IMR-90 (cell line): ENCODE measurements at regions of chr13 and their contacts with region 1.

Region 1: DNA sequence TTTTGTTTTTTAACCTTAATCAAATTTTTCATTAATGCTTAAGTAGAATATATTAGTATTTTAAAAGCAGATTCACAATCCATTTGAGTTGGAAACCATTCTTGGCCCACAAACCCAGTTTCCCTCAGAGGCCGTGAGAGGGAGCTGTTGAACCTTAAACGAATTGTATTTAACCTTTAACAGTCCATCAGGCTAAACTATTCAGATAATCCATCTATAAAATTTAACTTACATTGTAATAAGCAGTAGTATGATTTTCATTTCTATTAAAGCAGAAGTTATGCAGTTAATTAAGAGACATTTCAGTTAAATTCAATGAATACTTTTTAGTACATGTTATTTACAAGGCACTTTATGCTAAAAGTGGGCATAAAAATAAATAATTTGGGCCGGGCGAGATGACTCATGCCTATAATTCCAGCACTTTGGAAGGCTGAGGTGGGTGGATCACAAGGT is 123.1 kb upstream of the C1QTNF9B start:
- DNase-seq: peak; percentile 76
- ATAC-seq: peak; percentile 92
- H3K4me3 ChIP-seq: no peak overlapping the region
- H3K27ac ChIP-seq: no peak overlapping the region
- H3K4me1 ChIP-seq: no peaks in the 10 kb centered on the region; the same call in 1 of the 2 replicates
- H3K27me3 ChIP-seq: no peaks in the 10 kb centered on the region
- CTCF ChIP-seq: peak; percentile 93
- POLR2A ChIP-seq: no peak
- RAD21 ChIP-seq: peak; percentile 89

Region 2: DNA sequence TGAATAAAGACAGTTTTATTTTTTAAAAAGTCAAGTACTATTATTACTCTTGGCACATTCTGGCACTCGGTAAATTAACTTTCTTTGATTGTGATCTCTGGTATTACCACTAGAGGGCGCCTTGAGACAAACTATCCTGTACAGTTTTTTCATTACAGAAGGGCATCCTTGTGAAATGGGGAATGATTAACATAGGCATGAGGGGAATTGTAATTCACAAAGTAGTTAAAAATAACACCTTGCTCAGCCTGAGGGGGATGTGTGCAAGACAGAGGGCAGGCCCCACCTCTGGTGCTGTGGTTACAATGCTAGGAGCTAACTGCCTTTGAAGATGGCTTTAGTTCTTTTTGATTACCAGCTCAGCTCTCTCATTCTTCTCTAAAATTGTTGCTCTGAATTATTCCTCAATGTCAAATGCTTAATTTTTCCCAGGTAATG is 98.9 kb before region 1 on chr13:
- CTCF ChIA-PET with region 1: no interaction called
- POLR2A ChIA-PET with region 1: no interaction called
- dilution Hi-C with region 1: no loop called
- in situ Hi-C with region 1: no loop called
- intact Hi-C with region 1: loop called (anchors 2 kb)
- DNase-seq: peak; percentile 66
- ATAC-seq: peak; percentile 61
- H3K4me3 ChIP-seq: no peak overlapping the region
- H3K27ac ChIP-seq: no peak overlapping the region
- H3K4me1 ChIP-seq: peaks cover 2% of the 10 kb centered on the region; the same call in 1 of the 2 replicates
- H3K27me3 ChIP-seq: no peaks in the 10 kb centered on the region
- CTCF ChIP-seq: peak; percentile 83
- POLR2A ChIP-seq: no peak
- RAD21 ChIP-seq: peak; percentile 86

Region 3: DNA sequence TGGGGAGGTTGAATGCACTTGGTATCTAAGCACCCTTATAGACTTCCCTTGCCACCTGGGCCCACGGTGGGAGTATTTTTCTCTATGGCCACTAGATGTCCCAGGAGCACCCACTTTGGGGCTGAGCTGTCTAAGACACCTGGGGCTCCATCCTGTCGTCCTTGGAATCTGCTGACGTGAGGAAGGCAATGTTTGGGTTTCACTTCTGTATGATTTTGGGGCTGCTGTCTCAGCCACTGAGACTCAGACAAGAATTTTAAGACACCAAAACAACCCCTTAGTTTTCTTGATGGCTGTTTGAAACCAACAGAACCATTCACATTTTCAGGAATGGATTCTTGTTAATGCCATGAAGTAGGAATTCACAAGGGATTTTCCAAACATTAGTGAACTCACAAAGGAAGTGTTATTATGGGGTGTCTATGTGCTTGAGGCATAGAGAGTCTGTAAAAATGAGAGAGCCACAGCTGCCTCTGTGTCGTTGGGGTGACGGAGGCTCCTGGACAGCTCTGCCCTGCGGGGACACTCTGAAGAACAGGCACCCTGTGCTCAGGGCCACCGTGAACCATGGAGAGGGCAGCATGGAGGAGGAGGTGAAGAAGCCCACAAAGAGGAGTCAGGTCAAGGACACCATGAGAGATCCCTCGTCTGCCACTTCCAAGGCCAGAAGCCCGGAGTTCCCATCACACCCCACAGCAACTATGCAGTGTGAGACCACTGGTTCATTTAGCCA is 33.3 kb after region 1 on chr13:
- CTCF ChIA-PET with region 1: interaction called, 3 read pairs
- POLR2A ChIA-PET with region 1: no interaction called
- dilution Hi-C with region 1: no loop called
- in situ Hi-C with region 1: no loop called
- intact Hi-C with region 1: loop called (anchors 2 kb)
- DNase-seq: peak; percentile 68
- ATAC-seq: peak; percentile 86
- H3K4me3 ChIP-seq: no peak overlapping the region
- H3K27ac ChIP-seq: no peak overlapping the region
- H3K4me1 ChIP-seq: peaks cover 14% of the 10 kb centered on the region
- H3K27me3 ChIP-seq: no peaks in the 10 kb centered on the region
- CTCF ChIP-seq: peak; percentile 70
- POLR2A ChIP-seq: no peak
- RAD21 ChIP-seq: peak; percentile 84

Region 4: DNA sequence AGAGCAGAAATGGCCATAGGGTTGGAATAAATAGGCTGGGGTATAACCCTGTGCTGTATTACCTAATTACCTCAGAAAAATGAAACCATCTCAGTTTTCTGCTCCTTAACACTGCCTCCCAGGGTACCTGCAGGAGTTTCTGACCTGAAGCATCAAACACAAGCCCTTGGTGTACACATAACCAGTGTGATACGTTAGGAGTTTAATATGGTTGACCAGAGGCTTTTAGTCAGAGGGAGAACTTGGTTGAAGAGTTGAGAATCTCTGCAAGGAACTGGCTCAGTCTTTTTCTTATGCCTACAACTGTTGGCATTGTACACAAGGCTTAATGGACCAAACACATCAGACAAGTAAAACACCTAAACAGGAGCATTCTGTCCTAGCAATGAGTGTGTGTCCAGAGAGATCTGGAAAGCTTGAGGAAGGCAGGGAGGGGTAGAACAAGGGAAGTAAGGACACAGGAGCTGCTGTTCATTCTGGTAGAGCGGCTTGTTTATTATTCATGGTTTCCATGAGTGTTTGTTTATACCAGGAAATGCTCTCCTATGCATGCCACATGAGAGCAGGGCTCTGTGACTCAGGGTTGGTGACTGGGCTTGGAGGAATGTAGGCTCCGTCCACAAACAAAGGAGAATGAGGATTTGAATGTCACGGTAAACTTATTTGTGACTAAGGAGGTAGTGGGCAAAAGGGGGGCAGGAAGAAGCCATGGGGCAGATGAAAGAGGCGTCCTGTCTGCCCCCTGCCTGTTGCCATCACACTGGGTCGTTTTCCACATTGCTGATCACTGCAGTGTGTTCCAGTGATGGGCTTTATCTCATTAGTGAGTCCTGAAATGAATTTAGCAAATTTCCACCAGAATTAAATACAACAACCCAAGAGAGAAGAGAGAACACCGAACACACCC is 128.2 kb after region 1 on chr13:
- CTCF ChIA-PET with region 1: no interaction called
- POLR2A ChIA-PET with region 1: no interaction called
- dilution Hi-C with region 1: no loop called
- in situ Hi-C with region 1: no loop called
- intact Hi-C with region 1: no loop called
- DNase-seq: peak; percentile 99
- ATAC-seq: peak; percentile 92
- H3K4me3 ChIP-seq: no peak overlapping the region
- H3K27ac ChIP-seq: peak overlapping the region; percentile 91
- H3K4me1 ChIP-seq: peaks cover 25% of the 10 kb centered on the region
- H3K27me3 ChIP-seq: no peaks in the 10 kb centered on the region
- CTCF ChIP-seq: peak; percentile 46
- POLR2A ChIP-seq: no peak
- RAD21 ChIP-seq: peak; percentile 36

Region 5: DNA sequence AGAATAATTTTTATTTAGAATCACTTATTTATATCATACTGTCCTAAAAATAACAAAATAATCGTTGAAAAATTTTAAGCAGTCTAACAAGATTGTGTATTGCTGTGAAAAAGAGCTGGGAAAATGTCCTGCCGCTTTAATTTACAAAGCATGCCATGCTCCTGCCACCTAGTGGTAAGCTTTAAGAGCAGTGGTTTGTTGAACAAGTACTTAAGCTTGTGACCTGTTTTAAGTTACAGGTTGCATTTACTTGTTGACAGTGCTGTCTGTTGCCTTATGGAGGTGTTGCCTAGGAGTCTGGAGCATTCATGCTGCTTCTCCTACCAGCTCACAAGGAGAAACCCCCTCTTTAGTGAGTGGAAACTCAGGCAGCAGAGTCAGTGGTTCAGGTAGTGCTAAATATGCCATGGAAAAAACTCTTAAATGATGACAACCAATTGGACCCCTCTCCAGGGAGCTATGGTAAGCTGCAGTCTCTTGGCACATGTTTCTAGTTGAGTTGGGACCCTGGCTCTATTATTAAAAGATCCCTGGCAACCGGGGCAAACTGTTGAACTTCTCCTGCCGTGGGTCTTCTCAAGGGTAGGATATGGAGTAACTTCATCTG is 208.6 kb after region 1 on chr13:
- CTCF ChIA-PET with region 1: interaction called, 10 read pairs
- POLR2A ChIA-PET with region 1: no interaction called
- dilution Hi-C with region 1: no loop called
- in situ Hi-C with region 1: loop called (anchors 5 kb)
- intact Hi-C with region 1: no loop called
- DNase-seq: peak; percentile 81
- ATAC-seq: peak; percentile 54
- H3K4me3 ChIP-seq: no peak overlapping the region
- H3K27ac ChIP-seq: no peak overlapping the region
- H3K4me1 ChIP-seq: peaks cover 6% of the 10 kb centered on the region; the same call in 1 of the 2 replicates
- H3K27me3 ChIP-seq: no peaks in the 10 kb centered on the region
- CTCF ChIP-seq: peak; percentile 87
- POLR2A ChIP-seq: no peak
- RAD21 ChIP-seq: peak; percentile 79

Region 6: GRCh38 chr13:25153736-25154135 is 1133.3 kb after region 1 on chr13:
- CTCF ChIA-PET with region 1: no interaction called
- POLR2A ChIA-PET with region 1: no interaction called
- dilution Hi-C with region 1: no loop called
- in situ Hi-C with region 1: no loop called
- intact Hi-C with region 1: no loop called
- DNase-seq: no peak
- ATAC-seq: no peak
- H3K4me3 ChIP-seq: no peak overlapping the region
- H3K27ac ChIP-seq: no peak overlapping the region
- H3K4me1 ChIP-seq: no peaks in the 10 kb centered on the region
- H3K27me3 ChIP-seq: peaks cover 2% of the 10 kb centered on the region; the same call in 1 of the 2 replicates
- CTCF ChIP-seq: no peak
- POLR2A ChIP-seq: no peak
- RAD21 ChIP-seq: no peak